Right ventricle myocardium superior (tissue), 1 donor: ENCODE measurements at regions of chr20 and their contacts with region 1.

Region 1: DNA sequence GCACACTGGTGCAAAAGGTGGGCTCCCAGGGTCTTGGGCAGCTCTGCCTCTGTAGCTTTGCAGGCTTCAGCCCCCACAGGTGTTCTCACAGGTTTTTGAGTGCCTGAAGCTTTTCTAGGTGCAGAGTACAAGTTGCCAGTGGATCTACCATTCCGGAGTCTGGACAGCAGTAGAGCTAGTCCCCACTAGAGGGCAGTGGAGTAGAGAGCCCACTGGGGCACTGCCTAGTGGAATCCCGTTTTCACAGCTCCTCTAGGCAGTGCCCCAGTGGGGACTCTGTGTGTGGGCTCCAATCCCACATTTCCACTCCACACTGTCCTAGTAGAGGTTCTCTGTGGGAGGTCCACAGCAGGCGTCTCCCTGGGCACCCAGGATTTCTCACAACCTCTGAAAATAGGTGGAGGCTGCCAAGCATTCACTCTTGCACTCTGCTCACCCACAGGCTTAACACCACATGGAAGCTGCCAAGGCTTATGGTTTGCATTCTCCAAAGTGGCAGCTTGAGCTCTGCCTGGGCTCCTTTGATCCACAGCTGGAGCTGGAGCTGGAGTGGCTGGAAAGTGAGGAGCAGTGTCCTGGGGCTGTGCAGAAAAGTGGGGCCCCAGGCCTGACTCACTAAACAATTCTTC is 86.3 kb upstream of the PROKR2 start:
- DNase-seq: no peak
- ATAC-seq: no peak

Region 2: DNA sequence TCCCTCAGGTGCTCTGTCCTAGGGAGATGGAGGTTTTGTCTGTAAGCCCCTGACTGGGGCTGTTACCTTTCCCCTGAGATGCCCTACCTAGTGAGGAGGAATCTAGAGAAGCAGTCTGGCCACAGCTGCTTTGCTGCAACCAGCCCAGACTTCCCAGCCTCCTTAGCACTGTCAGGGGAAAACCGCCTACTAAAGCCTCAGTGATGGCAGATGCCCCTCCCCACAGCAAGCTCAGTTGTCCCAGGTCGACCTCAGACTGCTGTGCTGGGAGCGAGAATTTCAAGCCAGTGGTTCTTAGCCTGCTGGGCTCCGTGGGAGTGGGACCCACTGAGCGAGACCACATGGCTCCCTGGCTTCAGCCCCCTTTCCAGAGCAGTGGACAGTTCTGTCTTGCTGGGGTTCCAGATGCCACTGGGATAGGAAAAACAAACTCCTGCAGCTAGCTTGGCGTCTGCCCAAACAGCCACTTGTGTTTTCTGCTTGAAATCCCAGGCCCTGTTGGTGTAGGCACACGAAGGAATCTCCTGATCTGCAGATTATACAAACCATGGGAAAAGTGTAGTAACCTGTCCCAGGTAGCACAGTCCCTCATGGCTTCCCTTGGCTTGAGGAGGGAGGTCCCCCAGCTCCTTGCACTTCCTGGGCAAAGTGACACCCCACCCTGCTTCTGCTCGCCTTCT is 60.1 kb after region 1 on chr20:
- intact Hi-C with region 1: loop called (anchors 10 kb)
- DNase-seq: no peak
- ATAC-seq: no peak